ENCODE measurements at regions of chr1 and their contacts with region 1.

Region 1: GRCh38 chr1:197924516-197925123 is 7.4 kb downstream of the LHX9 start:
- DNase-seq: peak in 1 of 2 donors; percentile 75
- ATAC-seq: peak in 2 of 3 donors; percentile 55 to 72
- H3K4me3 ChIP-seq: no peak overlapping the region
- H3K4me3 Mint-ChIP-seq: no peak overlapping the region
- H3K27ac ChIP-seq: no peak overlapping the region
- H3K27ac Mint-ChIP-seq: no peak overlapping the region
- H3K4me1 ChIP-seq: peaks cover 21% of the 10 kb centered on the region
- H3K4me1 Mint-ChIP-seq: peaks cover 24 to 26% of the 10 kb centered on the region in 2 donors
- H3K27me3 ChIP-seq: peaks cover 55% of the 10 kb centered on the region
- H3K27me3 Mint-ChIP-seq: peaks cover 74 to 88% of the 10 kb centered on the region in 2 donors
- CTCF ChIP-seq: peak; percentile 65

Region 2: GRCh38 chr1:197521118-197521739 is 403.4 kb before region 1 on chr1:
- intact Hi-C with region 1: loop called (anchors 1 kb)
- DNase-seq: peak in 1 of 2 donors; percentile 63
- ATAC-seq: peak in 2 of 3 donors; percentile 57 to 64
- H3K4me3 ChIP-seq: no peak overlapping the region
- H3K4me3 Mint-ChIP-seq: no peak overlapping the region
- H3K27ac ChIP-seq: no peak overlapping the region
- H3K27ac Mint-ChIP-seq: no peak overlapping the region
- H3K4me1 ChIP-seq: no peaks in the 10 kb centered on the region
- H3K4me1 Mint-ChIP-seq: peaks cover 0 to 5% of the 10 kb centered on the region in 2 donors
- H3K27me3 ChIP-seq: no peaks in the 10 kb centered on the region
- H3K27me3 Mint-ChIP-seq: no peaks in the 10 kb centered on the region
- CTCF ChIP-seq: peak; percentile 84

Region 3: DNA sequence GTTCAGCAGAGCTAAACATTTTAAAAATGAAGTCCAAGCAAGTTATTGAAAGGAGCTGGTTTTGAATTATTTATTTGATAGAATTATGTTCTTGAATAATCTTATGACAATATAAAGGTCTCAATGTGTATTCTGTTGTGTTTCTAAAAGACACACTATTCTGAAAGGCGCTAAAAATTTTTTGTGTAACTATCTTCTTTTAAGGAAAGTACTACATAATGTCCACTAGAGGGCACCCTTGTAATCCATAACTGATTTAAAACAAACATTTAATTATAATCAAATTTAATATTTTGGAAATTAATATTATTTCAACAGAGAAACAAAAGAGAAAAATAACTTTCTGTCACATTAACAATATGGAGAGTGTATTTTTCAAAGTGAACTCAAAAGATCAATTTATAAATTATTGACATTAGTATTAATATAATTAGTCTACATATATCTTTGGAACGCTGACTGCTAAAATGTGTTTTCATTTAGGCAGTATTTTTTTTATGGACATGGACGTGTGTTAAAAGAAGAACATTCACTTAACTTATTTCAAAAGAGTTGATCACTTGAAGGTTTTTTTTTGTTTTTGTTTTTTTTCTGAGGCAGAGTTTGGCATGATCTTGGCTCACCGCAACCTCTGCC is 397.8 kb before region 1 on chr1:
- intact Hi-C with region 1: loop called (anchors 1 kb)
- DNase-seq: peak in 1 of 2 donors; percentile 64
- ATAC-seq: peak in 1 of 3 donors; percentile 55
- H3K4me3 ChIP-seq: no peak overlapping the region
- H3K4me3 Mint-ChIP-seq: no peak overlapping the region
- H3K27ac ChIP-seq: no peak overlapping the region
- H3K27ac Mint-ChIP-seq: no peak overlapping the region
- H3K4me1 ChIP-seq: no peaks in the 10 kb centered on the region
- H3K4me1 Mint-ChIP-seq: no peaks in the 10 kb centered on the region
- H3K27me3 ChIP-seq: no peaks in the 10 kb centered on the region
- H3K27me3 Mint-ChIP-seq: no peaks in the 10 kb centered on the region
- CTCF ChIP-seq: peak; percentile 96

Region 4: DNA sequence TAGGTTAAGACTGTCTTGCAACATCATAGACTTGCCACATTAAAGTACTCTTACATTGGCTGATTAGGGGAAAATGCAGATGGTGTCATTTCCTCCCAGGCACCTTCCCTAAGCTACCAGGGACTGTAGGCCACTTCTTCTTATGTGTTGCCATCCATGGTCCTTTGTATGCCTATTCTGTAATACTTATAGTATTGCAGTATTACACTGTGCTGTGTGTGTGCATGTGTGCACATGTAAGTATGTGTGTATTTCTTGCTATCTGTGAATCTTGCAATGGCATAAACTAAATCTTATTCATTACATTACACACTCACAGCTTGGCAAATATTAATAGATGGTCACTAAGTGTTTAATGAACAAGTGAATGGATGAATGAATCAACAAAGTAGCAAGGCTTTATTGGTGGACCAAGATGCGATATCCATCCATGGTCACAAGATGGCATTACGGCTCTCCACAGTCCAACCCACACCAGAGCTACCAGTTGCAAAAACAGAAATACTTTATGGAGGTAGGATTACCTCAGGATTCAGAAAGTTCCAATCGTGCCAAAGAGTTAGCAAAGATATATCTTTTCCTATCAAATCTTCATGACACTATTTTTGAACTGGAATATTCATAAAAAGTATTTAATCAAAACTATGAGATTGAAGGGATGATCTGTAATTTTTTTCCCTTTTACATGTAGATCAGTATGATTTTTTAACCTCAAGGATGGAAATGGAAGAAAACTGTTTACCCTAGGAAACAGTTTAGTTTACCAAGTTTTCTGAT is 309.5 kb before region 1 on chr1:
- intact Hi-C with region 1: loop called (anchors 2 kb)
- DNase-seq: peak in 1 of 2 donors; percentile 59
- ATAC-seq: peak; percentile 57 to 77 (median 61)
- H3K4me3 ChIP-seq: no peak overlapping the region
- H3K4me3 Mint-ChIP-seq: no peak overlapping the region
- H3K27ac ChIP-seq: no peak overlapping the region
- H3K27ac Mint-ChIP-seq: no peak overlapping the region
- H3K4me1 ChIP-seq: no peaks in the 10 kb centered on the region
- H3K4me1 Mint-ChIP-seq: no peaks in the 10 kb centered on the region
- H3K27me3 ChIP-seq: no peaks in the 10 kb centered on the region
- H3K27me3 Mint-ChIP-seq: no peaks in the 10 kb centered on the region
- CTCF ChIP-seq: peak; percentile 60

Region 5: GRCh38 chr1:198465201-198466144 is 540.9 kb after region 1 on chr1:
- intact Hi-C with region 1: loop called (anchors 10 kb)
- DNase-seq: peak in 1 of 2 donors; percentile 67
- ATAC-seq: peak; percentile 36 to 70 (median 58)
- H3K4me3 ChIP-seq: no peak overlapping the region
- H3K4me3 Mint-ChIP-seq: no peak overlapping the region
- H3K27ac ChIP-seq: no peak overlapping the region
- H3K27ac Mint-ChIP-seq: no peak overlapping the region
- H3K4me1 ChIP-seq: no peaks in the 10 kb centered on the region
- H3K4me1 Mint-ChIP-seq: peaks cover 0 to 17% of the 10 kb centered on the region in 2 donors
- H3K27me3 ChIP-seq: no peaks in the 10 kb centered on the region
- H3K27me3 Mint-ChIP-seq: no peaks in the 10 kb centered on the region
- CTCF ChIP-seq: peak; percentile 67

Measured in natural killer cell (primary cell).